CD8-positive, alpha-beta memory T cell (primary cell): ENCODE measurements at regions of chr11 and their contacts with region 1.

Region 1: GRCh38 chr11:34475656-34476055 is 36.9 kb downstream of the CAT start:
- DNase-seq: no peak
- H3K4me3 ChIP-seq: no peak overlapping the region
- H3K4me3 Mint-ChIP-seq: no peak overlapping the region
- H3K27ac ChIP-seq: no peak overlapping the region
- H3K27ac Mint-ChIP-seq: no peak overlapping the region
- H3K4me1 ChIP-seq: no peaks in the 10 kb centered on the region
- H3K4me1 Mint-ChIP-seq: no peaks in the 10 kb centered on the region
- H3K27me3 ChIP-seq: no peaks in the 10 kb centered on the region
- H3K27me3 Mint-ChIP-seq: peaks cover 0 to 2% of the 10 kb centered on the region in 2 donors

Region 2: DNA sequence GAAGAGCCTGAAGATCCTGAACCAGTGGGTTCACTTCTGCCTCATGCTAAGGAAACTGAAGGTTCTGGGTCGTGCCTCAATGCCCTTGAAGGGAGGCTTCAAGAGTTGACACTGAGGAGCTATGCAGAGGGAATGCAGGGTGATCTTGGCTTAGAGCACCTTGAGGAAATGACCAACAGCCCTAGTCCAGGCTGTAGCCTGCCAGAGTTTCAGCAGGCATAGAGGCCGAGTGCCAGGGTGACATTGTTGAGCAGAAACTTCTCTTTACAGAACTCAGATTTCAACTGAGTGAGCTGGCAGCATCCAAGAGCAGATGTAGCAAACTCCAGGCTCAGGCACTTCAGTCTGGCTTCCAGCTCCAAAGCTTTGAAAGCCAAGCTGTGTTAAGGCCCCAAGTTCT is 447.2 kb before region 1 on chr11:
- CTCF ChIA-PET with region 1: no interaction called
- POLR2A ChIA-PET with region 1: interaction called, 11 read pairs
- DNase-seq: no peak
- H3K4me3 ChIP-seq: no peak overlapping the region
- H3K4me3 Mint-ChIP-seq: no peak overlapping the region
- H3K27ac ChIP-seq: no peak overlapping the region
- H3K27ac Mint-ChIP-seq: no peak overlapping the region
- H3K4me1 ChIP-seq: no peaks in the 10 kb centered on the region
- H3K4me1 Mint-ChIP-seq: no peaks in the 10 kb centered on the region
- H3K27me3 ChIP-seq: no peaks in the 10 kb centered on the region
- H3K27me3 Mint-ChIP-seq: peaks cover 10 to 13% of the 10 kb centered on the region in 2 donors

Region 3: DNA sequence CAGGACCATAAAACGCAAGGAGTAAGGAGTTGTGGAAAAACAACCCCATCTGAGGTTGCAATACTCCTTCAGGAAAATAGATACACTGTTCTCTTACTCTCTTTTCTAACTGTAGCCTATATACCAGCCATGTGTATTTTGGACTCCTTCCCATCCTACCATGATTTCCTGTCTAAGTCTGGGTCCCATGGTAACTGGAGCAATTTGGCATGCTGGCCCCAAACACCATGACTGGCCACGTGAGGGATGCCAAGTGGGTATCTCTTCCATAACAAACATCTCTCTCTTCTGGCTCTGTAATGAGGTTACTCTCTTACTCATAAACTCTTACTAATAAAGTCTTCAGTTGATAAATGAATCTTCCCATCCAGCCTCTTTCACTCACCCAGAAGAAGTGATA is 144.3 kb before region 1 on chr11:
- CTCF ChIA-PET with region 1: no interaction called
- POLR2A ChIA-PET with region 1: no interaction called
- DNase-seq: no peak
- H3K4me3 ChIP-seq: no peak overlapping the region
- H3K4me3 Mint-ChIP-seq: no peak overlapping the region
- H3K27ac ChIP-seq: no peak overlapping the region
- H3K27ac Mint-ChIP-seq: no peak overlapping the region
- H3K4me1 ChIP-seq: no peaks in the 10 kb centered on the region
- H3K4me1 Mint-ChIP-seq: peaks cover 0 to 5% (median 0%) of the 10 kb centered on the region in 3 donors
- H3K27me3 ChIP-seq: no peaks in the 10 kb centered on the region
- H3K27me3 Mint-ChIP-seq: peaks cover 6 to 15% of the 10 kb centered on the region in 2 donors

Region 4: DNA sequence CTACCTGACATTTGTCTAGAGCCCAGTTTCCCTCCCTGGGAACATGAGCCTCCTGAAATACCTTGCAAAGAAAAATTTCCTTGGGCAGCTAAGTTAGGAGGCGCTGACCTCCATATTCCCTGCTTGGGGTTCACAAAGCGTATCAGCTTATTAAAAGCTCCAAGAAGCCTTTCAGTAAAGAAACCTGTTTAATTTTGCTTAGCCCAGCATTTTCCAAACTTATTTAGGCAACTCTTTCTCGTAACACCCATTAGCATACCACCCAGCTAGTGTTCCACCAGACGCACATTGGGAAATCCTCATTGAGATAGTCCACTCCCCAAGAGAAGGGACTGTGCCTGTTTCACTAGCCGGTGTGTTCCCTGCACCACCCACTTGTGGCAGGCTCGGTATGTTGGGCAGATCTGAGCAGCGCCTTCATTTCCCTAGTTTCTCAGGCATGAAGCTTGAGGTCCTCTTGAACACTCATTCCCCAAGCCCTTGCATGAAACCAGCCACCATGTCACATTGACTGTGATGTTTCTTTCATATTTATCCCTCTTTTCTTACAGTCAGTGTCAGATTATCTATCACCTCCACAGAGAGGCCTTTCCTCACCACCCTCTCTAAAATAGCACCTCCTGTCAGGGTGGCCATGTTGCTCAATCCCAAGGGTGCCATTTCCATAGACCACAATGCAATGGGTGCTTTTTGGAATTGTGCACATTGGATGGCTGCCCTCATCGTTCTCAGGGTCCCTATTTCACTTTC is 50.4 kb after region 1 on chr11:
- CTCF ChIA-PET with region 1: no interaction called
- POLR2A ChIA-PET with region 1: no interaction called
- DNase-seq: no peak
- H3K4me3 ChIP-seq: no peak overlapping the region
- H3K4me3 Mint-ChIP-seq: peak overlapping the region in 4 of 7 donors; percentile 38 to 59 (median 44)
- H3K27ac ChIP-seq: no peak overlapping the region
- H3K27ac Mint-ChIP-seq: no peak overlapping the region
- H3K4me1 ChIP-seq: no peaks in the 10 kb centered on the region
- H3K4me1 Mint-ChIP-seq: peaks cover 0 to 8% (median 7%) of the 10 kb centered on the region in 3 donors
- H3K27me3 ChIP-seq: no peaks in the 10 kb centered on the region
- H3K27me3 Mint-ChIP-seq: peaks cover 16 to 26% of the 10 kb centered on the region in 2 donors